ENCODE measurements at regions of chr1 and their contacts with region 1.

Region 1: DNA sequence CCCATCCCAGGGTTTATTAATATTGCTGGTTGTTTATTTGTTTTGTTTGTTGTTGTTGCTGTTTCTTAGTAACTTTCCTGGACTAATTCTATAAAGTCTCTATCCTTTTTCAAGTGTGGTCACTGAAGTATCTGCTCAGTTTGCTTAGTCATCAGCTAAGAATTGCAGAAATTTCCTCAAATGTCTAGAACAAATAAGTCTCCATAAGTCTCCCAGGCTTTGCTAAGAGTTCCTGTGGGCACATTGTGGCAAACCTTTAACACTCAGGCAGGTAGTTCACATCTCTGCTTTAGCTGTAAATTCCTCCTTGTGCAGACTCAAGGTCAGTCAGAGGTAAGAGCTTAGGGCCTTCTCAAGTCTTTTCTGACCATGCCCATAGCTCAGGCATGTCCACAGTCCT is 38.9 kb upstream of the C1orf185 start:
- DNase-seq: no peak
- H3K4me3 ChIP-seq: no peak overlapping the region
- H3K27ac ChIP-seq: no peak overlapping the region
- H3K4me1 ChIP-seq: no peaks in the 10 kb centered on the region
- H3K27me3 ChIP-seq: no peaks in the 10 kb centered on the region
- CTCF ChIP-seq: no peak
- POLR2A ChIP-seq: no peak

Region 2: DNA sequence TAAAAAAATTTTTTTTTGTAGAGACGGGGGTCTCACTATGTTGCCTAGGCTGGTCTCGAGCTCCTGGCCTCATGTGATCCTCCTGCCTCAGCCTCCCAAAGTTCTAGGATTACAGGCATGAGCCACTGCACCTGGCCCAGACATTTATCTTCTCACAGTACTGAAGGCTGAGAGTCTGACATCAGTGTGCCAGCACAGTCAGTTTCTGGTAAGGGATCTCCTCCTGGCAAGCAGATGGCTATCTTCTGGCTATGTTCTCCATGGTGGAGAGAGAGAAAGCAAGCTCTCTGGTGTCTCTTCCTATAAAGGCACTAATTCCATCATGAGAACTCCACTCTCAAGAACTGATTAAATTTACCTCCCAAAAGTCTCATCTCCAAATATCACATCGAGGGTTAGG is 18.9 kb before region 1 on chr1:
- intact Hi-C with region 1: no loop called
- DNase-seq: no peak
- H3K4me3 ChIP-seq: no peak overlapping the region
- H3K27ac ChIP-seq: no peak overlapping the region
- H3K4me1 ChIP-seq: no peaks in the 10 kb centered on the region
- H3K27me3 ChIP-seq: no peaks in the 10 kb centered on the region
- CTCF ChIP-seq: no peak
- POLR2A ChIP-seq: no peak

Region 3: GRCh38 chr1:51115714-51116404 is 52.7 kb after region 1 on chr1:
- intact Hi-C with region 1: loop called (anchors 2 kb)
- DNase-seq: no peak
- H3K4me3 ChIP-seq: no peak overlapping the region
- H3K27ac ChIP-seq: no peak overlapping the region
- H3K4me1 ChIP-seq: no peaks in the 10 kb centered on the region
- H3K27me3 ChIP-seq: no peaks in the 10 kb centered on the region
- CTCF ChIP-seq: no peak
- POLR2A ChIP-seq: no peak

Measured in vagina (tissue), 2 donors.